ENCODE measurements at regions of chr4 and their contacts with region 1.

Region 1: GRCh38 chr4:37793562-37793961 is 32.9 kb upstream of the PGM2 start:
- DNase-seq: no peak
- H3K4me3 ChIP-seq: no peak overlapping the region
- H3K27ac ChIP-seq: no peak overlapping the region
- H3K4me1 ChIP-seq: no peaks in the 10 kb centered on the region
- H3K27me3 ChIP-seq: no peaks in the 10 kb centered on the region
- CTCF ChIP-seq: peak; percentile 23 to 58 (median 57)
- EP300 ChIP-seq: no peak
- POLR2A ChIP-seq: no peak

Region 2: DNA sequence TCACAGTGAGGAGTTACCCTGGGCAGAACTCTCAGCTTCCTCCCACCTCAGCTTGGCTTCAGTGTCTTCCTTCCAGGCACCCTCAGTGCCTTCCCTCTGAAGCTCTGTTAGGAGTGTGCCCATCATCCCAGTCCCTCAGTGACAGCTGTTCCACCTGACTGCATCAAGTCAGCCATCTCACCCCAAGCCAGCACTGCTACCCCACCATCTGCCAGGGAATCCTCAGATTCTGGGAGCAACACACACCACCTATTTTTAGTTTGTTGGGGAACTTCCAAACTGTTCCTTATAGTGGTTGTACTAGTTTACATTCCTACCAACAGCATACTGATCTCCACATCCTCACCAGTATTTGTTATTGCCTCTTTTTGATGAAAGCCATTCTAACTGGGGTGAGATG is 290.3 kb before region 1 on chr4:
- intact Hi-C with region 1: no loop called
- DNase-seq: no peak
- H3K4me3 ChIP-seq: no peak overlapping the region
- H3K27ac ChIP-seq: no peak overlapping the region
- H3K4me1 ChIP-seq: no peaks in the 10 kb centered on the region
- H3K27me3 ChIP-seq: no peaks in the 10 kb centered on the region
- CTCF ChIP-seq: no peak
- EP300 ChIP-seq: no peak
- POLR2A ChIP-seq: no peak

Region 3: DNA sequence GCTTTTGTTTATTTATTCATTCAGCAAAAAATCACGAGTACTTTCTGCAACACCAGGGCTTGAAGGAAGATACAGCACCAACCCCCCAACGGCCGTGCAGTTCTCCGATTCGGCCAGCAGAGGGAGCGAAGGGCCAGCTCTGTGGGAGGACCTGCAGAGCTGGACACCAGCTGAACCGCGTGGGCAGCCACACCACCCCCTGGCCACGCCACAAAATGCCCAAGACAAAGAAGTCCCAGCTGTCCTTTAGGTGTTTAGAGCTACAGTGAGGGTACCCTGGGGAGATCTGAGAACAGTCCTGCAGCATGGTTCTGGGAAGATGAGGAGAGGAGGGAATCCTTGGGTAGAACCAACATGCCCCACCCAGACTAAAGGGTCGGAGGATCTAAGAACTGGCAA is 190.5 kb before region 1 on chr4:
- intact Hi-C with region 1: loop called (anchors 5 kb)
- DNase-seq: peak; percentile 96
- H3K4me3 ChIP-seq: no peak overlapping the region
- H3K27ac ChIP-seq: no peak overlapping the region
- H3K4me1 ChIP-seq: peaks cover 4 to 7% (median 6%) of the 10 kb centered on the region in 4 donors
- H3K27me3 ChIP-seq: no peaks in the 10 kb centered on the region
- CTCF ChIP-seq: peak; percentile 98 to 99 (median 99)
- EP300 ChIP-seq: no peak
- POLR2A ChIP-seq: no peak

Region 4: DNA sequence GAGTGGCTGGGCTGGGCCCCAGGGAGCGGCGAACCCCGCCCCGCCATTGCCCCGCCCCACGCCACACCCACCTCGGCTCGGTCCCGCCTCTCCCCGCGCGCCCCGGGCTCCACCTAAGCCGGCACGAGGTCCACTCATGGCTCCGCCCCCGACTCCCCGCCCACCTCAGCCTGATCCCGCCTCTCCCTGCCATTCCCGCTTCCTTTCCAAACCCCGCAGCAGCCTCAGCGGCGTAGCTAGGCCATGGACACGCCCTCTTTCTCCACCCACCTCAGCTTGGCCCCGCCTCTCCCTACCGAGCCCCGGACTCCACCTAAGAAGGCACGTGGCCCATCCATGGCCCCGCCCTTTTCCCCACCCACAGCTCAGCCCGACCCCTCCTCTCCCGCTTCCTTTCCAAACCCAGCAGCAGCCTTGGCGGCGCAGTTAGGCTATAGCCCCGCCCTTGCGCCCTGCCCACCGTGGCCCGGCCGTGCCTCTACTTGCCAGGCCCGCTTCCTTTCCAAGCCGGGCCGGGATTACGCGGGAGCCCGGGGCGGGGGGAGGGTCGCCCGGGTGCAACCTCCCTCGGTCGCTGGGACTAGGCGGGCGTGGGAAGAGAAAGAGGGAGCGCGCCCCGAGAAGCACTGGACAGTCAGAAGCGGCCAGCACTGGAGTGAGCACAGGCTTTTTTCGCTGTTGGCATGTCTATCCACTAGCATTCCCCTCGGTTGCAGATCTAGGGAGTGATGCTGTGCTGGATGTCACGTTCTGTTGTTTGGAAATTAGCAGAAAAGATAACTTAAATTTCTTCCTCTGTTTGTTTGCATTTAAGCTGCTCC is 107.0 kb before region 1 on chr4 and contains the start of gene RELL1:
- intact Hi-C with region 1: loop called (anchors 10 kb)
- DNase-seq: peak; percentile 100
- H3K4me3 ChIP-seq: peak within 1 kb of the TSS; percentile 85 to 99 (median 96)
- H3K27ac ChIP-seq: peak within 1 kb of the TSS; percentile 96 to 99 (median 99)
- H3K4me1 ChIP-seq: peaks cover 18 to 47% (median 39%) of the 10 kb centered on the region in 4 donors
- H3K27me3 ChIP-seq: no peaks in the 10 kb centered on the region
- CTCF ChIP-seq: no peak
- EP300 ChIP-seq: no peak
- POLR2A ChIP-seq: no peak
- total RNA-seq, gene RELL1: 44.4 to 83.3 (median 73.6) TPM